GM12878 (cell line): ENCODE measurements at regions of chr18 and their contacts with region 1.

Region 1: GRCh38 chr18:44786688-44787087 is 106.0 kb downstream of the SETBP1 start:
- DNase-seq: no peak
- ATAC-seq: peak; percentile 85
- H3K4me3 ChIP-seq: peak overlapping the region; percentile 41; the same call in 1 of the 2 replicates
- H3K27ac ChIP-seq: peak overlapping the region; percentile 64
- H3K4me1 ChIP-seq: peaks cover 20% of the 10 kb centered on the region
- H3K27me3 ChIP-seq: no peaks in the 10 kb centered on the region
- CTCF ChIP-seq: no peak
- EP300 ChIP-seq: no peak
- POLR2A ChIP-seq: no peak
- RAD21 ChIP-seq: no peak

Region 2: DNA sequence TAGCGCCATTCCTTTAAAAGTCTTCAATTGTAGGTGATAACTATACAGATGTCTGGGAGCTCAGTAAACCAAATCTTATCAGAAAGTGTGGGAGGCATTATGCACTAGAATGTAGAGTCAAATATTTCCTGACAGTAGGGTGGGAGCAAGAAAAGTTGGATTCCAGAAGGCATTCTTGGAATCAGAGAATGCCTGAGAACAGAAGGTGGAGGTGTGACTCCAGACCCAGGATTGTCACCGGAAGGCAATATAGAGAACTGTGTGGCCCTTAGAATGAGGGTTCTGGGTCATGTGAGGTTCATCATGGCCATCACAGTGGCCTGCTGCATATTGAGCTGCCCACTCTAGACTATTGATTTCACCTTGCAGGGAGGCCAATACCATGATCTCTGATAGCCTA is 16.0 kb before region 1 on chr18:
- CTCF ChIA-PET with region 1: interaction called, 3 read pairs
- POLR2A ChIA-PET with region 1: no interaction called
- RAD21 ChIA-PET with region 1: no interaction called
- SMC1A ChIA-PET with region 1: interaction called, 10 read pairs
- in situ Hi-C with region 1: no loop called
- intact Hi-C with region 1: no loop called
- DNase-seq: no peak
- ATAC-seq: no peak
- H3K4me3 ChIP-seq: no peak overlapping the region
- H3K27ac ChIP-seq: no peak overlapping the region
- H3K4me1 ChIP-seq: no peaks in the 10 kb centered on the region
- H3K27me3 ChIP-seq: no peaks in the 10 kb centered on the region
- CTCF ChIP-seq: no peak
- EP300 ChIP-seq: no peak
- POLR2A ChIP-seq: no peak
- RAD21 ChIP-seq: no peak